MCF 10A (cell line): ENCODE measurements at regions of chr12 and their contacts with region 1.

Region 1: DNA sequence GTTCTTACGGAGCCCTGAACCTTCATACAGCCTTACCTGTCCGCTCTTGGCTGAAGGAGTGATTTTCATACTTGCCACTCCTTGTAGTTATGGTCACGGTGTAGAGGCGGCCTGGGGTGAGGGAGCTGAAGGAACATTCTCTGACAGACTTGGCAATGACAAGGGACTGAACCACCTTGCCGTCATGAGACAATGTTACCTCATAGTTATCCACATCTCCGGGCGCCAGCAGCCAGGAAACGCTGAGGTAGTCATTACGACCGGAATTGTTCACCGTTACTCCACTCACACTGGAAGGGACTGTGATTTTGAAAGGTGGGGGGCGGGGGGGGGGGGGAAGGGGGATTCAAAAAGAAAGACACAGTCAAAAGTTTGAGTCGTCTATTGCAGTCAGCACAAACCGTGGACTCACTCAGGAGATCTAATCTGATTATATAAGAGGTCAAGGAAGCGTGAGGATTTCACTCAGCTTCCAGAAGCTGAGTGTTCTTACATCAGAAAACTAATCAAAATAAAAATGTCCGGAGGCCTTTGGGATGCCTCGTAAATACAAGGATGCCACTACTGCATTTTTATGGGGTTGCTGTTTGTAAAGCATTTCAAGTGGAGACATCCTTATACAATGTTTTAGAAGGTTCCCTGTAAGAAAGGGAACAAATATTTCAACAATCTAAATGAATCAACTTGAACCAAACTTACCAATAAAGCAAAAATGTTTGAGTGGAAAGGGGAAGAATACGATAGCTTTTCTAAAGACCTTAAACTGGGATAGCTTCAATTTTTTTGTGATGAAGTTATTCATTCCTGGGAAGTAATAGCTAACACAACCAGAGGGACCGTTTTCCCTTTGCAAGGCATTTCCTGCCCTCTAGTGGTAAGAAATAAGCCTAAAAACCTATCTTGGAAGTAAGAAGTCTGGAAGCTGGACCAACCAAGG is 60.6 kb downstream of the PTPRB start:
- DNase-seq: peak; percentile 81
- H3K4me3 Mint-ChIP-seq: no peak overlapping the region
- H3K27ac Mint-ChIP-seq: no peak overlapping the region
- H3K4me1 Mint-ChIP-seq: no peaks in the 10 kb centered on the region
- H3K27me3 Mint-ChIP-seq: no peaks in the 10 kb centered on the region
- CTCF ChIP-seq: peak; percentile 76

Region 2: GRCh38 chr12:69879041-69879960 is 697.3 kb before region 1 on chr12:
- CTCF ChIA-PET with region 1: interaction called, 79 read pairs
- POLR2A ChIA-PET with region 1: interaction called, 9 read pairs
- intact Hi-C with region 1: loop called (anchors 1 kb)
- DNase-seq: peak; percentile 83
- H3K4me3 Mint-ChIP-seq: peak overlapping the region; percentile 60
- H3K27ac Mint-ChIP-seq: no peak overlapping the region
- H3K4me1 Mint-ChIP-seq: peaks cover 7% of the 10 kb centered on the region
- H3K27me3 Mint-ChIP-seq: no peaks in the 10 kb centered on the region
- CTCF ChIP-seq: peak; percentile 94

Region 3: GRCh38 chr12:69900720-69901131 is 675.9 kb before region 1 on chr12:
- CTCF ChIA-PET with region 1: interaction called, 38 read pairs
- POLR2A ChIA-PET with region 1: interaction called, 11 read pairs
- intact Hi-C with region 1: loop called (anchors 1 kb)
- DNase-seq: peak; percentile 92
- H3K4me3 Mint-ChIP-seq: no peak overlapping the region
- H3K27ac Mint-ChIP-seq: no peak overlapping the region
- H3K4me1 Mint-ChIP-seq: peaks cover 10% of the 10 kb centered on the region
- H3K27me3 Mint-ChIP-seq: no peaks in the 10 kb centered on the region
- CTCF ChIP-seq: peak; percentile 89

Region 4: GRCh38 chr12:70364695-70365397 is 211.8 kb before region 1 on chr12:
- CTCF ChIA-PET with region 1: interaction called, 4 read pairs
- POLR2A ChIA-PET with region 1: no interaction called
- intact Hi-C with region 1: loop called (anchors 5 kb)
- DNase-seq: peak; percentile 9
- H3K4me3 Mint-ChIP-seq: peak overlapping the region; percentile 80
- H3K27ac Mint-ChIP-seq: no peak overlapping the region
- H3K4me1 Mint-ChIP-seq: peaks cover 9% of the 10 kb centered on the region
- H3K27me3 Mint-ChIP-seq: peaks cover 15% of the 10 kb centered on the region
- CTCF ChIP-seq: no peak

Region 5: DNA sequence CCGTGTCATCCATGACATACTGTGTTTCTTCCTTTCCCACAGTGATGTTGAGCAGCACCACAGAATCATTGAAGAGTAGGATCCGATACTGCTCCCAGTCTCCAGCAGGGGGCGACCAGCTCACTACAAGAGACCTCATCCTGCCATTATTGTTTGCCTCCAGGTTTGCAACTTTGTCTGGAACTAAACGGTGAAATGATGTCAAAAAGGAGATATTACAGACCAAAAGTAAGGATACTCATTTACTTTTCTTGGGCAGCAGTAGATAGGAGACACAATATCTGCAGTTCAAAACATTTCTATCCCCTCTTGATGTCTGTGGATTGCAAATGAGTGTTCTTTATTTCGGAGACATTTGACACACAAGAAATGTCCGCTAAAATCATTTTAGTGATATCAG is 13.4 kb after region 1 on chr12:
- CTCF ChIA-PET with region 1: interaction called, 10 read pairs
- POLR2A ChIA-PET with region 1: no interaction called
- intact Hi-C with region 1: no loop called
- DNase-seq: peak; percentile 83
- H3K4me3 Mint-ChIP-seq: no peak overlapping the region
- H3K27ac Mint-ChIP-seq: no peak overlapping the region
- H3K4me1 Mint-ChIP-seq: no peaks in the 10 kb centered on the region
- H3K27me3 Mint-ChIP-seq: no peaks in the 10 kb centered on the region
- CTCF ChIP-seq: peak; percentile 78

Region 6: DNA sequence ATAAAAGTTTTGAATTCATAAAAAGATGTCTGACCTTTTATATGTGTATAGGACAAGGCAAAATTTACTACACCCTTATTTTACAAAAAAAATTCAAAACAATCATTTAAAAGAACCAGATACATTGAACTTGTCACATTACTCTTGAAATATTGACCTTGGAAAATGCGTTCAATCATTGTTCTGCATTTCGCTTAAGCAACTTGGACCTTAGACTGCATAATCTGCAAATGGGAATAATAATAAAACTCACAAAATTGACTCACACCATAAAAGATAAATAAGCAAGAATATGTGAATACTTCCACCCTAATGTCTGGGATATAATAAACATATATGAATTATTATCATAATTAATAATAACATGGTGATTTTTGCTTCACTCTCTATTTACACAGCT is 130.0 kb after region 1 on chr12:
- CTCF ChIA-PET with region 1: no interaction called
- POLR2A ChIA-PET with region 1: no interaction called
- intact Hi-C with region 1: no loop called
- DNase-seq: no peak
- H3K4me3 Mint-ChIP-seq: no peak overlapping the region
- H3K27ac Mint-ChIP-seq: no peak overlapping the region
- H3K4me1 Mint-ChIP-seq: no peaks in the 10 kb centered on the region
- H3K27me3 Mint-ChIP-seq: peaks cover 18% of the 10 kb centered on the region
- CTCF ChIP-seq: no peak